ENCODE measurements at regions of chr2 and their contacts with region 1.

Region 1: DNA sequence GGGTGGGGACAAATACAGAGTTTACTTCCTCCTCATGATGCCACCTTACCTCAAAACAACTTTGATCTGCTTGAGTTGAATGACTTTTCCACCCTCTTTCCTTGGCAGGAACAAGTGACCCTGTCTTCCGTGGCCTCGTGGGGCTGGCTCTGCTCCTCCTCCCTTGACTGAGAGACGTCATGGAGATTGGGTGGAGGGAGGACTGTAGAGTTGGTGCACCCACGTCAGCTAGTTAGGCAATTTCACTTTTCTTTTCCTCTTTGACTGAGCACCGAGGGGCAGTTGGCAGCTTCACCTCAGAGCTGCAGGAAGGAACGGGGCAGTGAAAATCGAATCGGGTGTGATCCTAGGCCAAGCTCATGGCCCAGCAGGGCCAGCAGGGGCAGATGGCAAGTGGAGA is at the start of gene SP140:
- DNase-seq: peak; percentile 55
- ATAC-seq: peak; percentile 74
- H3K4me3 Mint-ChIP-seq: peak within 1 kb of the TSS; percentile 92
- H3K27ac Mint-ChIP-seq: peak within 1 kb of the TSS; percentile 98
- H3K4me1 Mint-ChIP-seq: peaks cover 86% of the 10 kb centered on the region
- H3K27me3 Mint-ChIP-seq: no peaks in the 10 kb centered on the region
- CTCF ChIP-seq: no peak
- total RNA-seq, gene SP140: 295 and 330 TPM in 2 replicates

Region 2: GRCh38 chr2:229921892-229922445 is 303.5 kb before region 1 on chr2 and contains the start of gene TRIP12:
- CTCF ChIA-PET with region 1: no interaction called
- POLR2A ChIA-PET with region 1: no interaction called
- intact Hi-C with region 1: loop called (anchors 2 kb)
- DNase-seq: peak; percentile 94
- ATAC-seq: peak; percentile 76
- H3K4me3 Mint-ChIP-seq: peak within 1 kb of the TSS; percentile 94
- H3K27ac Mint-ChIP-seq: peak within 1 kb of the TSS; percentile 96
- H3K4me1 Mint-ChIP-seq: peaks cover 42% of the 10 kb centered on the region
- H3K27me3 Mint-ChIP-seq: no peaks in the 10 kb centered on the region
- CTCF ChIP-seq: no peak
- total RNA-seq, gene TRIP12: 255 and 272 TPM in 2 replicates

Region 3: GRCh38 chr2:230170532-230170931 is 55.0 kb before region 1 on chr2:
- CTCF ChIA-PET with region 1: no interaction called
- POLR2A ChIA-PET with region 1: no interaction called
- intact Hi-C with region 1: no loop called
- DNase-seq: no peak
- ATAC-seq: no peak
- H3K4me3 Mint-ChIP-seq: no peak overlapping the region
- H3K27ac Mint-ChIP-seq: no peak overlapping the region
- H3K4me1 Mint-ChIP-seq: no peaks in the 10 kb centered on the region
- H3K27me3 Mint-ChIP-seq: no peaks in the 10 kb centered on the region
- CTCF ChIP-seq: no peak

Region 4: GRCh38 chr2:230184727-230185578 is 40.5 kb before region 1 on chr2:
- CTCF ChIA-PET with region 1: no interaction called
- POLR2A ChIA-PET with region 1: no interaction called
- intact Hi-C with region 1: no loop called
- DNase-seq: no peak
- ATAC-seq: no peak
- H3K4me3 Mint-ChIP-seq: no peak overlapping the region
- H3K27ac Mint-ChIP-seq: peak overlapping the region; percentile 70
- H3K4me1 Mint-ChIP-seq: peaks cover 8% of the 10 kb centered on the region
- H3K27me3 Mint-ChIP-seq: no peaks in the 10 kb centered on the region
- CTCF ChIP-seq: no peak

Region 5: DNA sequence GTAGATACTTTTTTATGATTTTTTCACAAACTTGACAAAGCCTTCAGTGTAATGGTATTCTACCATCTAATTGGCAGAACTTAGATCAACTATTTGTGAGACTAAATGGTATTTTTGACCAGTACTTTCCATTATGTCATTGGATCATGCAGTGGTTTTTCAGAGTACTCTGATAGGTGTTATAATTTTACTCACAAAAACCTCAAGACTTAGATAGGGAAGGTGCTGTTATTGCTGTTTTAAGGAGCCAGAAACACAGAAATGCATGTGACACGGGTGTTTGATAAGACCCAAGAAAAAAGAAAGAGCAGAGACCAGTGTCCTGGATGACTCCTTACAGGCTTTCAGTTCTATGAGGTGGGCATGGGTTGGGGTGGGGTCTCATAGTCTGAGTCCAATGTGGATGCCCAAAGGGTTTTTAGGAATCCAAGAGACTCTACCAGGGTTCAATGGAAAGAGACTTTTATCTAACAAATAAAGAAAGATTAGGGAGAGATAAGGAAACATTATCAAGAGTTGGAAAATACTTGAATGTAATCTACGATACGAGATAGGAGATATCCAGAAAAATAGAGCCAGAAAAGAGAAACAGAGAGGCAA is 31.3 kb after region 1 on chr2:
- CTCF ChIA-PET with region 1: no interaction called
- POLR2A ChIA-PET with region 1: interaction called, 22 read pairs
- intact Hi-C with region 1: loop called (anchors 2 kb)
- DNase-seq: no peak
- ATAC-seq: no peak
- H3K4me3 Mint-ChIP-seq: peak overlapping the region; percentile 50
- H3K27ac Mint-ChIP-seq: peak overlapping the region; percentile 89
- H3K4me1 Mint-ChIP-seq: peaks cover 46% of the 10 kb centered on the region
- H3K27me3 Mint-ChIP-seq: no peaks in the 10 kb centered on the region
- CTCF ChIP-seq: no peak

Region 6: GRCh38 chr2:230268606-230269243 is 43.2 kb after region 1 on chr2:
- CTCF ChIA-PET with region 1: no interaction called
- POLR2A ChIA-PET with region 1: interaction called, 38 read pairs
- intact Hi-C with region 1: loop called (anchors 1 kb)
- DNase-seq: no peak
- ATAC-seq: no peak
- H3K4me3 Mint-ChIP-seq: peak overlapping the region; percentile 60
- H3K27ac Mint-ChIP-seq: peak overlapping the region; percentile 92
- H3K4me1 Mint-ChIP-seq: peaks cover 81% of the 10 kb centered on the region
- H3K27me3 Mint-ChIP-seq: no peaks in the 10 kb centered on the region
- CTCF ChIP-seq: no peak

Region 7: GRCh38 chr2:230447455-230448451 is 222.3 kb after region 1 on chr2:
- CTCF ChIA-PET with region 1: no interaction called
- POLR2A ChIA-PET with region 1: interaction called, 5 read pairs
- intact Hi-C with region 1: loop called (anchors 5 kb)
- DNase-seq: no peak
- ATAC-seq: peak; percentile 81
- H3K4me3 Mint-ChIP-seq: peak overlapping the region; percentile 83
- H3K27ac Mint-ChIP-seq: peak overlapping the region; percentile 99
- H3K4me1 Mint-ChIP-seq: peaks cover 93% of the 10 kb centered on the region
- H3K27me3 Mint-ChIP-seq: no peaks in the 10 kb centered on the region
- CTCF ChIP-seq: no peak

Measured in activated B cell treated with CpG ODN at 0.5 μM for 24 hours (primary cell).